ENCODE measurements at regions of chr1 and their contacts with region 1.

Region 1: GRCh38 chr1:6727535-6727934 is 25.9 kb upstream of the DNAJC11 start:
- DNase-seq: peak in 4 of 5 donors; percentile 38 to 58 (median 43)
- ATAC-seq: peak in 3 of 4 donors; percentile 48 to 64 (median 54)
- H3K4me3 ChIP-seq: no peak overlapping the region
- H3K27ac ChIP-seq: no peak overlapping the region
- H3K4me1 ChIP-seq: peaks cover 0 to 9% (median 0%) of the 10 kb centered on the region in 12 donors
- H3K27me3 ChIP-seq: no peaks in the 10 kb centered on the region
- CTCF ChIP-seq: peak; percentile 68 to 89 (median 86)
- POLR2A ChIP-seq: no peak

Region 2: DNA sequence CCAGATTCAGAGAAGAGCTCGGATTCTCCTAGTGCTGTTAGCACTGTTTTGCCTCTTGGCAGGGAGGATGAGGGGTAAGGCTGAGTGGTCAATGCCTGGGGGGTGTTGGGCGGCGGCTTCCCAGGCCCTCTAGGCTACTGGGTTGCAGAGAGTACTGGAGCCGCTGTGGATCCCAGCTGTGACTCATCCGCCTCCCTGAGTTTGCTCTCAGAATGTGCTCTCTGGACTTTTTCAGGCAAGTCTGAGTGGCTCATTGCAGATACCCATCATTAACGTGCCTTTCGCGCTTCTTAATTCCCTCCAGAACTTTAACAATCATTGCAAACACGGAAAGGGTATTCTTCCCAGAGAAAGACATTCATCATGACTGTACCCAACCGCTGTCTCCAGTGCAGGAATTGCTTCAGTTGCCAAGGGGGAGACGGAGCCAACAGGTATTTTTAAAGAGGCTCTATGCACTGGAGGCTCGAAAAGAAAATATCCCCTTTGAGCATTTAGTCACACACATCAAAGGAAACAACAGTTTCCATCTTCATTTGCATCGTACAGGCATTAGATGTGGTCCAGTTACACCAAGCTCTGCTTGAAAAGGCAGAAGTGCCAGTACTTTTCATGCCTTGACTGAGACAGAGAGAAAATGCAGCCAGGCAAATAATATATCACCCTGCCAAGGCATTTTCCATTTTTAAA is 43.4 kb after region 1 on chr1:
- intact Hi-C with region 1: loop called in 1 of 10 experiments (anchors 10 kb)
- DNase-seq: no peak
- ATAC-seq: peak in 1 of 4 donors; percentile 41
- H3K4me3 ChIP-seq: no peak overlapping the region
- H3K27ac ChIP-seq: no peak overlapping the region
- H3K4me1 ChIP-seq: peaks cover 0 to 7% (median 0%) of the 10 kb centered on the region in 12 donors
- H3K27me3 ChIP-seq: peaks cover 0 to 14% (median 0%) of the 10 kb centered on the region in 9 donors
- CTCF ChIP-seq: no peak
- POLR2A ChIP-seq: no peak

Region 3: DNA sequence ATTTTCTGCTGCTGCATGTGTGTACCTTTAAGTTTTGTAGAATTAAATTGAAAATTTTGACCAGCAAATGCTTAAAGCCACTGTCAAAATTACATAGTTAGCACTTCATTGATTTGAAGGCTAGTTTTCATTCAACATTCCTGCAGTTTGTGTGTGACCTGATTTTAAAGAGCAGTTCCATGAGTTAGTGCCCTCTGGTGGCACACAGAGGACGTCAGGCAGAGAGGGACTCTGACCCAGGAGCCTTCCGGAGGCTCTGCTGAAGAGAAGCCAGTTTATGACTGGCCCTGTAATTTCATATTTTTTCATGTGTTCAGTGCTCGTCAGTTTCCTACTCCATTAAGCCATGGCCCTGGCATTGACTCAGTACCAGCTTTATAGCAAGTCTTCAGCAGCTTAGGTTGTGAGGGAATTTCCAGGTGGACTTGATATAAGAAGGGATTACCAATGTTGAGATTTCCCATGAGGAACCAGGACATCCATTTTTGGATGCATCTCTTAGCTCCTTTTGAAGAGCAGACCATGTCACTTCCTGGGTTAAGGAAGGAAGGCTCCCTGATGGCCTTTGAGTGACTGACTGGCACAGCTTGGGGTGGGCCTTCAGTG is 162.4 kb after region 1 on chr1:
- intact Hi-C with region 1: loop called in 9 of 10 experiments (anchors 2 to 5 kb)
- DNase-seq: peak in 4 of 5 donors; percentile 38 to 52 (median 45)
- ATAC-seq: peak; percentile 37 to 84 (median 68)
- H3K4me3 ChIP-seq: no peak overlapping the region
- H3K27ac ChIP-seq: no peak overlapping the region
- H3K4me1 ChIP-seq: peaks cover 0 to 9% (median 0%) of the 10 kb centered on the region in 12 donors
- H3K27me3 ChIP-seq: no peaks in the 10 kb centered on the region
- CTCF ChIP-seq: peak; percentile 67 to 90 (median 80)
- POLR2A ChIP-seq: no peak

Region 4: GRCh38 chr1:7070389-7071029 is 343.0 kb after region 1 on chr1:
- intact Hi-C with region 1: loop called in 4 of 10 experiments (anchors 5 to 10 kb)
- DNase-seq: peak in 4 of 5 donors; percentile 55 to 64 (median 62)
- ATAC-seq: peak in 3 of 4 donors; percentile 74 to 90 (median 78)
- H3K4me3 ChIP-seq: peak overlapping the region in 11 of 12 donors; percentile 7 to 54 (median 33)
- H3K27ac ChIP-seq: no peak overlapping the region
- H3K4me1 ChIP-seq: peaks cover 0 to 7% (median 5%) of the 10 kb centered on the region in 12 donors
- H3K27me3 ChIP-seq: peaks cover 0 to 5% (median 0%) of the 10 kb centered on the region in 9 donors
- CTCF ChIP-seq: peak; percentile 68 to 90 (median 80)
- POLR2A ChIP-seq: no peak

Region 5: DNA sequence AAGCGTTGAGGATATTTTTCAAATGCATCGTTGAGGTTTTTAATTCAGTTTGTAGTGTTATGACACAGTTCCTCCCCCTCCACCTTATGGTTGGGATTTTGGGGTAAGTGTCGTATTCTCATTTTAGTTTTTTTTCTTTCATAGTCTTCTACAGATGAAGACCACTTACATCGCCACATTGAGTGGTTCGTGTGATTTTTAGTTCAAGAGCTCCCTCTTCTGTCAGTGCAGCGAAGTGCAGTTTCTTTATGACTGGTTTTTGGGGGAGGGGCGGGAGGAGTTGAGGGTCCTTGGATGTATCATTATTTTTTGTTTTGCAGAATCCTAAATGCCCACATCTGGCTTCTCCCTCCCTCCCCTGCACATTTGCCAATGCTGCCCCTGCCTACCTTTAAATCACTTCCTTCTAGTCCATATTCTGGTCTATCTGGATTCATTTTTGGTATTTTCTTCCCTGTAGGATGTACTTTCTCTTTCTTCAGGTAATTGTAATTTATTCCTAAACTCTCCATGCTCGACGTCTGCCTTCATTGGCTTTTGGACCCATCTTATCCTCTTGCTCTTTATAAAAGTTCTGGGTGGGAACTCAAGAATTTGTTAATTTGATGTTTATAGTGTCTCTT is 490.8 kb after region 1 on chr1:
- intact Hi-C with region 1: loop called in 6 of 10 experiments (anchors 5 to 10 kb)
- DNase-seq: no peak
- ATAC-seq: no peak
- H3K4me3 ChIP-seq: no peak overlapping the region
- H3K27ac ChIP-seq: no peak overlapping the region
- H3K4me1 ChIP-seq: no peaks in the 10 kb centered on the region
- H3K27me3 ChIP-seq: peaks cover 0 to 9% (median 0%) of the 10 kb centered on the region in 9 donors
- CTCF ChIP-seq: peak; percentile 39 to 70 (median 60)
- POLR2A ChIP-seq: no peak